MCF 10A (cell line): ENCODE measurements at regions of chr9 and their contacts with region 1.

Region 1: GRCh38 chr9:114434878-114435311 is 47.1 kb upstream of the AKNA start:
- DNase-seq: peak; percentile 61
- H3K4me3 Mint-ChIP-seq: no peak overlapping the region
- H3K27ac Mint-ChIP-seq: no peak overlapping the region
- H3K4me1 Mint-ChIP-seq: no peaks in the 10 kb centered on the region
- H3K27me3 Mint-ChIP-seq: no peaks in the 10 kb centered on the region
- CTCF ChIP-seq: peak; percentile 79

Region 2: GRCh38 chr9:114339130-114339908 is 95.6 kb before region 1 on chr9:
- CTCF ChIA-PET with region 1: interaction called, 13 read pairs
- POLR2A ChIA-PET with region 1: no interaction called
- intact Hi-C with region 1: no loop called
- DNase-seq: peak; percentile 60
- H3K4me3 Mint-ChIP-seq: no peak overlapping the region
- H3K27ac Mint-ChIP-seq: no peak overlapping the region
- H3K4me1 Mint-ChIP-seq: no peaks in the 10 kb centered on the region
- H3K27me3 Mint-ChIP-seq: no peaks in the 10 kb centered on the region
- CTCF ChIP-seq: peak; percentile 89

Region 3: DNA sequence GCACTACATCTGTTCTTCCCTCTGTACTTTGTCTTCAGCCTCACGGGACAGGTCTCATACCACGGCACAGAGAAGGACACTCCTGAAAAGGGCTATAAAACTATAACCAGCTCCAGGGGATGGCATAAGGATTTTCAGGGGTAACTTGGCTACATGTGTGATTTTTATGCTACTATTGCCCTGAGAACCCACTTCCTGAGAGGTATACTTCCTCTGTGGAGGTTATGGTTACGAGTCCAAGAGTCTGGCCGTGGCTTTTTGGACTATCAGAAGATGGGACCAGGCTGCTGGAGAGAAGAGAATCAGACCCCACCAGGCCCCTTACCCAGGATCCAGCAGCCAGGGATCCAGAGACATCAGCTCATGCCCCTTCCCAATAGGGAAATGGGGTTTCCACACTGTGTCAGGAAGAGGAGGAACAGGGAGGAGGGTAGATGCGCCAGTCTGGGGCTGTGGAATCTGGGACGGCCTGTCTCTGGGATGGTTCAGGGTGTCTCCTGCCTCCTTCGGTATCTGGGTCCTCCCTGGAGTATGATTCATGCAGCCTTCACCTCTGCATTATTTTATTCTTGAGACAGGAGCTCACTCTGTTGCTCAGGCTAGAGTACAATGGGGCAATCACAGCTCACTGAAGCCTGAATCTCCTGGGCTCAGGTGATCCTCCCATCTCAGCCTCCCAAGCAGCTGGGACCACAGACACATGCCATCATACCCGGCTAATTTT is 40.7 kb after region 1 on chr9:
- CTCF ChIA-PET with region 1: interaction called, 10 read pairs
- POLR2A ChIA-PET with region 1: no interaction called
- intact Hi-C with region 1: no loop called
- DNase-seq: no peak
- H3K4me3 Mint-ChIP-seq: no peak overlapping the region
- H3K27ac Mint-ChIP-seq: no peak overlapping the region
- H3K4me1 Mint-ChIP-seq: peaks cover 11% of the 10 kb centered on the region
- H3K27me3 Mint-ChIP-seq: no peaks in the 10 kb centered on the region
- CTCF ChIP-seq: no peak

Region 4: DNA sequence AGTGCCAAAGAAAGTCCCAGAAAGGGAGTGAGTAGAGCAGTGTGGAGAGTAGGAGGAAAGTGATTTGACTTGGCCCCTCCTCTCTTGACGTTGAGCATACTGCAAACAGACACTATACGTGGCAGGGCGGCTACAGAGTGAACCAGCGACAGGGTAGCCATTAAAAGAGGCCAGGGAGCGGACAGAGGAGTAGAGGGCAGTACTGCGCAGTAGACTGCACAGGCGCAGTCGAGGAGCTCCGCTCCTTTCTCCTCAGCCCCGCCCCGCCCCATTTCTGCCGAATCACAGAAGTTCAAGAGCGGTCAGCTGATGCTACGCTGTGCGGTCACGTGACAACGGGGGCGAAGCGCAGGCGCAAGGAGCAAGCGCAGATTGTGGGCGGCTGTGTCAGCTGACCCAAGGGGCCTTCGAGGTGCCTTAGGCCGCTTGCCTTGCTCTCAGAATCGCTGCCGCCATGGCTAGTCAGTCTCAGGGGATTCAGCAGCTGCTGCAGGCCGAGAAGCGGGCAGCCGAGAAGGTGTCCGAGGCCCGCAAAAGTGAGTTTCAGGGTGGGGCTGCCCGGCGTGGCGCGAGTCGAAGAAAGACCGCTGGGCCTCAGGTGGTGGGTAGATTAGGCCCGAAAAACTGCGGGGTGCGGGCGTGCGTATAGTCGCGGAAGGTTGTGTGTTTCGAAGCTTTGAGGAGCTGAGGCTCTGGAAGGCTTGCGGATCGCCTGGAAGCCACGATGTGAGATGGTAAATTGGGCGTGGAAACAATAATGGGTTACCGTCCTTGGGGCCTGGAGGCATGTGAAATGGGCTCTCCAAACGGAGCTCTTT is 152.7 kb after region 1 on chr9 and contains the start of gene ATP6V1G1:
- CTCF ChIA-PET with region 1: interaction called, 3 read pairs
- POLR2A ChIA-PET with region 1: interaction called, 3 read pairs
- intact Hi-C with region 1: loop called (anchors 5 kb)
- DNase-seq: peak; percentile 99
- H3K4me3 Mint-ChIP-seq: peak within 1 kb of the TSS; percentile 100
- H3K27ac Mint-ChIP-seq: peak within 1 kb of the TSS; percentile 100
- H3K4me1 Mint-ChIP-seq: peaks cover 35% of the 10 kb centered on the region
- H3K27me3 Mint-ChIP-seq: no peaks in the 10 kb centered on the region
- CTCF ChIP-seq: no peak
- total RNA-seq, gene ATP6V1G1: 87.1 and 118 TPM in 2 replicates

Region 5: DNA sequence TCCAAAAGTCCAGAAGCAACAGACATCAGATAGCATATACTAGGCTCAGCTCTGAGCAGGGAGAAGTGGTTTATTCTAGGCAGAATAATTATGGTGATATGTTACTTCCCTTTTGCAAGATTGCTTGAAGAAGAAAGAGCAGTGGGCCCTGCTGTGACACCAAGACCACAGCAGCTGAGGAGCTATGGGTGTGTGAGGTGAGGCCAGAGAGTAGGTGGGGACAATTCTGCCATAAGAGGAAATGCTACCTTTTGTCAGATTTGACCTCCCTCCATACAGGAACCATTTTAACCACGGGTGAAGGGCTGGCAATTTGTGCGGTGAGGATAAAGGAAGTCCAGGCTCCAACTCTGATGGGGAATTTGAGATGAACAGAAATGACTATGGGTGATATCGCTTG is 319.7 kb after region 1 on chr9:
- CTCF ChIA-PET with region 1: no interaction called
- POLR2A ChIA-PET with region 1: no interaction called
- intact Hi-C with region 1: no loop called
- DNase-seq: no peak
- H3K4me3 Mint-ChIP-seq: no peak overlapping the region
- H3K27ac Mint-ChIP-seq: no peak overlapping the region
- H3K4me1 Mint-ChIP-seq: no peaks in the 10 kb centered on the region
- H3K27me3 Mint-ChIP-seq: peaks cover 35% of the 10 kb centered on the region
- CTCF ChIP-seq: no peak

Region 6: GRCh38 chr9:114930056-114930812 is 495.3 kb after region 1 on chr9 and contains the start of gene TNFSF8:
- CTCF ChIA-PET with region 1: no interaction called
- POLR2A ChIA-PET with region 1: no interaction called
- intact Hi-C with region 1: no loop called
- DNase-seq: no peak
- H3K4me3 Mint-ChIP-seq: no peak within 1 kb of the TSS
- H3K27ac Mint-ChIP-seq: no peak within 1 kb of the TSS
- H3K4me1 Mint-ChIP-seq: no peaks in the 10 kb centered on the region
- H3K27me3 Mint-ChIP-seq: peaks cover 12% of the 10 kb centered on the region
- CTCF ChIP-seq: no peak
- total RNA-seq, gene TNFSF8: not detected in 2 replicates

Region 7: DNA sequence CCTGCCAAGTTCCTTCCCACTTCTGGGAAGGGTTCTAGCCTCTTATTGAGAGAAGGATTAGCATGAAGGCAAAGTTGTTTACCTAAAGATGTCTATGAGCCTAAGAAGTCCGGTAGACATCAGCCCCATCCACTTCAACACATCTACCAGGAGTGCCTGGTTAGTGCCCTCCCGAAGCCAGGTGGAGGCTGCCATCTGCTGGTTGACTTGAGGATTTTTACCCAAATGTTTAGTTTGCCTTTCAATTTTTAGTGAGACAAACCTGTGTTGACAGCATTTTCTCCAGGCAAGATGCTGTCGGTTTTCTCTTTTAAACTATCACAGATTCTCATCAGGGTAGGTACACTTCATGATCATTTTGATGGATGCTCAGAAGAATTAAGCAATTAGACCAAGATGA is 579.1 kb after region 1 on chr9:
- CTCF ChIA-PET with region 1: interaction called, 4 read pairs
- POLR2A ChIA-PET with region 1: no interaction called
- intact Hi-C with region 1: loop called (anchors 10 kb)
- DNase-seq: peak; percentile 84
- H3K4me3 Mint-ChIP-seq: no peak overlapping the region
- H3K27ac Mint-ChIP-seq: no peak overlapping the region
- H3K4me1 Mint-ChIP-seq: peaks cover 17% of the 10 kb centered on the region
- H3K27me3 Mint-ChIP-seq: peaks cover 14% of the 10 kb centered on the region
- CTCF ChIP-seq: peak; percentile 75